Dendritic cell treated with granulocyte-macrophage colony-stimulating factor and Interleukin-4, amounts not matched to agents 40 ng/mL and 50 ng/mL, for 4 days (primary cell): ENCODE measurements at regions of chr12 and their contacts with region 1.

Region 1: DNA sequence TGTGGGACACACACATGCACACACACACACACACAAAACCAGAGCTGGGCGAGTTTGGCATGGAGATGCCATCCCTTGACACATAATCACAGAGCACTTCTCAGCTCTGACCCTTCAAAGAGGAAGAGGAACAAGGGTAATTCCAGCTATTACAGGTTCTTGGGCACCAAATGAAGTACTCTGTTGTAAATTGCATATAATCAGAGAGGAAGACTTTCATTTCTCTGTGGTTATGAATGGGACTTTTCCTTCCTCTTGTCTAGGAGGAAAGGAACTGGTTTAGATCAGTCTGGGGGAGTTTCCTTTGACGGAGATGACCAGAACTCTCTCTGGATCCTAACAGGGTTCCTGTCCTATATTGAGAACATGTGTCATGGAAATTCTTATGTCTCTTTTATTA is 26.4 kb upstream of the FGF6 start:
- H3K4me3 Mint-ChIP-seq: no peak overlapping the region
- H3K27ac Mint-ChIP-seq: peak overlapping the region; percentile 79
- H3K4me1 Mint-ChIP-seq: peaks cover 48% of the 10 kb centered on the region
- H3K27me3 Mint-ChIP-seq: peaks cover 40% of the 10 kb centered on the region

Region 2: GRCh38 chr12:4434706-4435425 is 37.2 kb before region 1 on chr12:
- intact Hi-C with region 1: loop called (anchors 2 kb)
- H3K4me3 Mint-ChIP-seq: peak overlapping the region; percentile 47
- H3K27ac Mint-ChIP-seq: peak overlapping the region; percentile 84
- H3K4me1 Mint-ChIP-seq: peaks cover 94% of the 10 kb centered on the region
- H3K27me3 Mint-ChIP-seq: no peaks in the 10 kb centered on the region

Region 3: GRCh38 chr12:4454315-4454860 is 17.7 kb before region 1 on chr12:
- intact Hi-C with region 1: loop called (anchors 2 kb)
- H3K4me3 Mint-ChIP-seq: no peak overlapping the region
- H3K27ac Mint-ChIP-seq: no peak overlapping the region
- H3K4me1 Mint-ChIP-seq: peaks cover 40% of the 10 kb centered on the region
- H3K27me3 Mint-ChIP-seq: peaks cover 27% of the 10 kb centered on the region